ENCODE measurements at regions of chr12 and their contacts with region 1.

Region 1: DNA sequence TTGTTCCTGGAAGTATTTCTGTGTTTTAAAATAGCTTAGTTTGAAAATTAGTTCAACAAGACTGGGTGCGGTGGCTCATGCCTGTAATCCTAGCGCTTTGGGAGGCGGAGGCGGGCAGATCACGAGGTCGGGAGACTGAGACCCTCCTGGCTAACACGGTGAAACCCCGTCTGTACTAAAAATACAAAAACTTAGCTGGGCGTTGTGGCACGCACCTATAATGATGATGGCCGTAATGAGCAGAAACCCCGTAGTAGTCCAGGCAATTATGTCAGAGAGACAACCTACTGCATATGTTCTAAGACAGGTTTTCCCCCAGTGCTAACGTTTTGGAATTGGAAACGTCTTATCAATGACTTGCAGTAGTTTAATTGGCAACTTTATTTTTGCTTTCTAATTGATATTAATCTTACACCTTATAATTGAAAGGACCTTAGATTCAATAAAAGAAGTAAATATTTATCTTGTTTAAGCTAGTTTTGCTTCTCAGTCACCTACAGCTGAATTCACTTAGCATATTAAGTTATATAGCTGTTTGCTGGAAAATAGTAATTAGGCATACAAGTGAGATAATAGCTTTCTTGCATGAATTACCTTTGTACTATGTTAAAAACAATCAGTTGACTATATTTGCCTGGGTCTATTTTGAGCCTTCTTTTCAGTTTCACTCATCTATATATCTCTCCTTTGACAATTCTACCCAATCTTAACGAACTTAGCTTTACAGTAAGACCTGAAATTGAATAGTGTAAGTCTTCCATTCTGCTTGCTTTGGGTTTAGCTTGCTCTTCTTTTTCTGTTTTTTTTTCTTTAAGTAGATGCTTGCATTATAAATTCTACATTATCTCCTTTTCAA is 15.6 kb downstream of the CLECL1 start:
- DNase-seq: no peak
- ATAC-seq: no peak
- H3K4me3 Mint-ChIP-seq: no peak overlapping the region
- H3K27ac Mint-ChIP-seq: no peak overlapping the region
- H3K4me1 Mint-ChIP-seq: peaks cover 16% of the 10 kb centered on the region
- H3K27me3 Mint-ChIP-seq: no peaks in the 10 kb centered on the region

Region 2: DNA sequence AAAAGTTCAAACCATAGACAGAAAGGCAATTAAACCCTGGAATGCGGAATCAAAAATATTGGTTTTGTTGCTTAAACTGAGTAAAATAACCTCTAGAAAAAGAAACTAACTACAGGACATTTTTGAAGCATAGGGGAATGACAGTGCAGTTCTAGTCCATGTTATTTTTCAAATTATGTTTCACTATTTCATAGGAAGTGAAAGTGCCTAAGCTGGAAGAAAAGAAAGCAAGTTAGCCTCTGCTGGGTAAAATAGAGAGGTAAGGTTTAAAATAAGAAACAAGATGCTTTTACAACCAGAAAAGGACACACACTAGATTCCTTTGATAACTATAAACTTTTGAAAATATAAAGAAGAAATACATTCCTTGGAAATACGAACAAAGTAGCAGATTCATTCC is 14.5 kb after region 1 on chr12:
- CTCF ChIA-PET with region 1: interaction called, 11 read pairs
- DNase-seq: no peak
- ATAC-seq: peak; percentile 56
- H3K4me3 Mint-ChIP-seq: peak overlapping the region; percentile 66
- H3K27ac Mint-ChIP-seq: peak overlapping the region; percentile 22
- H3K4me1 Mint-ChIP-seq: peaks cover 39% of the 10 kb centered on the region
- H3K27me3 Mint-ChIP-seq: no peaks in the 10 kb centered on the region

Measured in activated CD8-positive, alpha-beta memory T cell treated with anti-CD3 and anti-CD28 coated beads, Interleukin-2, amount 10 ng/mL, durations not matched to agents 7 days and 5 days (primary cell).